HCT116 (cell line): ENCODE measurements at regions of chr3 and their contacts with region 1.

Region 1: DNA sequence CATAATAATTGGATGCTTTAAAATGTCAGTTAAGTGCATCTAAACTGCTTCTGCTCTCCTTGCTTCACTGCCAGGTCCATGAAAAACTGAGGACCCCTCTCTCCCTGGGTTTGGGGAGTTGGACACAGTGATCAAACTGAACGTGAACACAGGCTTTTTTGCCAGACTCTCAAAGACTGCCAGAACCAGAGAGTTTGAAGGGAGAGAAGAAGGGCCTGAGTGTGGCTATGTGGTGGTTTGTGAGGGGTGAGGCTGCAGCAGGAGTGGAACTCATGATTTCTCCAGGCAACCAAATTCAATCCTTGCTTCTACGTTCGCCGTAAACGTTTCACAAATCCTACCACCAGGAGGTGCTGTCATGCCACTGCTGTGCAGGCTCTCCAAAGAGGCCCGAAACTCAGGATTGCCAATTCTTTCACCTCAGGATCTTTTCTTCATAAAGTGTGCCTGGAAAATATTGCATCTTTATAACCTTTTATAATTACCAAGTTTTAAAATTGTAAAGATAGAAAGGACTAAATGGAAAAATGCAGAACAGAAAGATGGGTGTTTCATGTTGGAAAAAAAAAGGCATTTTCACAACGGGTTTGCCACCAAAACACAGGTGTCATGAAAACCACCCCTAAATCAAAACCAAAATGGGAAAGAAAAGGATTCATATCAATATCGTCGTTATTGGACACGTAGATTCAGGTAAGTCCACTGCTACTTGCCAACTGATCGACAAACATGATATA is 19.7 kb downstream of the TM4SF4 start:
- DNase-seq: peak; percentile 42
- ATAC-seq: peak; percentile 90
- H3K4me3 ChIP-seq: no peak overlapping the region
- H3K27ac ChIP-seq: no peak overlapping the region
- H3K4me1 ChIP-seq: peaks cover 0 to 9% of the 10 kb centered on the region in 2 experiments; a peak in 1 of 4 replicates
- H3K27me3 ChIP-seq: no peaks in the 10 kb centered on the region
- CTCF ChIP-seq: peak; percentile 85 to 91 (median 86)
- POLR2A ChIP-seq: no peak
- RAD21 ChIP-seq: peak; percentile 93

Region 2: DNA sequence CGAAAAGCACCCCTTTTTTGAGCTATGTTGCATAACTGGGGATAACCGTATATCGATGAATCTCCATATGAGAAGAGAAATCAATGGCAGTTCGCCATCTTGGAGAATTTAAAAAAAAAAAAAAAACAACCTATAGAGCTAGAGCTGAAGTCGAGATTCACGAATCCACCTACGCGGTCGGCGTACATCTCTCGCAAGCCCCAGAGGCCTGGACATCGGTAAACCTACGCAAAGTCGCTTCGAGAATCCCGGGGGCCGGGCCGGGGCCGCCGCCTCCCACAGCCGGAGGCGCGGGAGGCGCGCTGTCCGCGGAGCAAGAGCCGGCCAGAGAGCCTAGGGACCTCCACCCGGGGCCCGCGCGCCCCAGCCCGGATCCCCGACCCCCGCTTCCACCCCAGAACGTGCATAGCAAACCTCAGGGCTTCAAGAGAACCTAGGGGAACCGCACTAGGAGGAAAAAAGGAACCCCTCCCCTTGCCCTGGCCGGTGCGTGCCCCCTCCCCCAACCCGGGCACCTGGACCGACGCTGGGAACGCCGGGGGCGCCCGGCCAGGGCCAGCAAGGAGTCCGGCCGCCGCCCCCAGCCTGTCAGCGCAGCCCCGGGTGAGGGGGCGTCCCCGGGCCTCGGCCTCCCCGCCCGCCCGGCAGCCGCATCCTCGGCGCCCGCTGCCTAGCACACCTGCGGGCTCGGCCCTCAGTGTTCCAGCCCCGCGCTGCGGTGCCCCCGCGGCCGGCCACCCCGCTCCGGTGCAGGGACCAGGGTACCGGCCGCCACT is 475.9 kb after region 1 on chr3:
- CTCF ChIA-PET with region 1: interaction called, 3 read pairs
- POLR2A ChIA-PET with region 1: no interaction called
- RAD21 ChIA-PET with region 1: no interaction called
- intact Hi-C with region 1: loop called (anchors 10 kb)
- DNase-seq: peak; percentile 73
- ATAC-seq: peak; percentile 58
- H3K4me3 ChIP-seq: peak overlapping the region; percentile 62 to 66
- H3K27ac ChIP-seq: peak overlapping the region; percentile 89
- H3K4me1 ChIP-seq: peaks cover 7 to 26% of the 10 kb centered on the region in 2 experiments; a peak in 3 of 4 replicates
- H3K27me3 ChIP-seq: no peaks in the 10 kb centered on the region
- CTCF ChIP-seq: no peak
- POLR2A ChIP-seq: no peak
- RAD21 ChIP-seq: no peak

Region 3: GRCh38 chr3:150227839-150228238 is 733.6 kb after region 1 on chr3:
- CTCF ChIA-PET with region 1: no interaction called
- POLR2A ChIA-PET with region 1: no interaction called
- RAD21 ChIA-PET with region 1: no interaction called
- intact Hi-C with region 1: loop called (anchors 10 kb)
- DNase-seq: peak; percentile 32
- ATAC-seq: peak; percentile 94
- H3K4me3 ChIP-seq: no peak overlapping the region
- H3K27ac ChIP-seq: no peak overlapping the region
- H3K4me1 ChIP-seq: no peaks in the 10 kb centered on the region
- H3K27me3 ChIP-seq: no peaks in the 10 kb centered on the region
- CTCF ChIP-seq: peak; percentile 70 to 90 (median 85); a peak in 5 of 6 replicates
- POLR2A ChIP-seq: no peak
- RAD21 ChIP-seq: peak; percentile 90